HEK293 (cell line): ENCODE measurements at regions of chr7 and their contacts with region 1.

Region 1: GRCh38 chr7:22726345-22727185 is 435 bp upstream of the IL6 start:
- H3K4me3 ChIP-seq: peak overlapping the region; percentile 8
- H3K27ac ChIP-seq: no peak overlapping the region
- H3K4me1 ChIP-seq: peaks cover 8% of the 10 kb centered on the region; the same call in 1 of the 2 replicates
- CTCF ChIP-seq: peak; percentile 49

Region 2: GRCh38 chr7:22671177-22671865 is 55.2 kb before region 1 on chr7:
- CTCF ChIA-PET with region 1: interaction called, 10 read pairs
- POLR2A ChIA-PET with region 1: no interaction called
- H3K4me3 ChIP-seq: no peak overlapping the region
- H3K27ac ChIP-seq: no peak overlapping the region
- H3K4me1 ChIP-seq: peaks cover 9% of the 10 kb centered on the region
- CTCF ChIP-seq: no peak